Right cardiac atrium (tissue), 5 donors: ENCODE measurements at regions of chr11 and their contacts with region 1.

Region 1: DNA sequence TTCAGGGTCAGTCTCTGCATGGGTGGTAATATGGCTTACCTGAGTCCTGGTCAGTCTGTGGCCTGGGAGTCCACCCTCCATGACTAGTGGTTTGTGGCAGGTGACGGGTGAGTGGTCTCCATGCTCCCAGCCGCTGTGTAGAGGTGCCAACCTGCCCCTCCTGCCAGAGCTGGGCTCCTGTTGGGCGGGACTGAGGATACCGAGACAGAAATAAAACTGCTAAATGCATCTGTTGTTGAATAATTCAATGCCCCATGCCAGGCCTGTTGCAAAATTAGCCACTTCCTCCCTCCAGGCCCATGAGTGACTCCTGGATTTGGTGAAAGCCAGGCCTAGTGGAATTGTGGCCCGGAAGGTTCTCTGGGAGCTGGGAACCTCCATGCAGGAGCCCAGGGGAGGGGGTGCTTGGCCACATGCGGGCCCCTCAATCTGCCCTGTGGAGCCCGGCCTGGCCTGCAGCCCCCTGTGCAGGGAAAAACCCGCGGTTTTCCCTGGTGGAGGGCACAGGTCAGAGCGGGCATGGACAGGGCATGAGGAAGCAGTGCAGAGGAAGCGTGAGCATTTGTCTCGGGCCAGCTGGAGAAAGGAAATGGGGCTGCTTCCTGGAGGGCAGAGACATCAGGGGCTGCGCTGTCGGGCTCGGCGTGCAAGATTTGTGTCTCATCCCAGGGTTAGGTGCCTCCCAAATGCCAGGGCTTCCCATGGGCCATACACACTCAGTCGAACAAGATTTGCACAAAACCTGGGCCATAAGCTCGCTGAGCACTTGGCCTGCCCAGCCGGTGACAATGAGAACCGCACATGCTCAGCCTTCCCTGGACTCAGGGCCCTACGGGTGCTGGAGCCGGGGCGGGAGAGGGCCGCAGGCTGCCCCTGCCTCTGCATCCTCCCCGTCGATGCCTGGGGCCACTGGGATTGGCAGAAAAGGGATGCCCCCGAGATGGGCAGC is 66.9 kb downstream of the KCNQ1 start:
- DNase-seq: peak; percentile 19 to 71 (median 65)
- ATAC-seq: peak; percentile 13 to 39
- H3K4me3 ChIP-seq: no peak overlapping the region
- H3K27ac ChIP-seq: peak overlapping the region; percentile 73
- H3K4me1 ChIP-seq: peaks cover 16% of the 10 kb centered on the region
- H3K27me3 ChIP-seq: no peaks in the 10 kb centered on the region

Region 2: GRCh38 chr11:2298795-2299761 is 212.6 kb before region 1 on chr11:
- intact Hi-C with region 1: loop called in 1 of 4 experiments (anchors 10 kb)
- DNase-seq: no peak
- ATAC-seq: no peak
- H3K4me3 ChIP-seq: no peak overlapping the region
- H3K27ac ChIP-seq: no peak overlapping the region
- H3K4me1 ChIP-seq: no peaks in the 10 kb centered on the region
- H3K27me3 ChIP-seq: no peaks in the 10 kb centered on the region

Region 3: GRCh38 chr11:2462908-2463765 is 48.6 kb before region 1 on chr11:
- intact Hi-C with region 1: loop called in 2 of 4 experiments (anchors 5 kb)
- DNase-seq: peak; percentile 67 to 90 (median 86)
- ATAC-seq: peak; percentile 76
- H3K4me3 ChIP-seq: no peak overlapping the region
- H3K27ac ChIP-seq: peak overlapping the region; percentile 72
- H3K4me1 ChIP-seq: peaks cover 5% of the 10 kb centered on the region
- H3K27me3 ChIP-seq: no peaks in the 10 kb centered on the region

Region 4: GRCh38 chr11:2475136-2475918 is 36.4 kb before region 1 on chr11:
- intact Hi-C with region 1: loop called in 1 of 4 experiments (anchors 5 kb)
- DNase-seq: no peak
- ATAC-seq: no peak
- H3K4me3 ChIP-seq: no peak overlapping the region
- H3K27ac ChIP-seq: no peak overlapping the region
- H3K4me1 ChIP-seq: no peaks in the 10 kb centered on the region
- H3K27me3 ChIP-seq: no peaks in the 10 kb centered on the region